ENCODE measurements at regions of chr5 and their contacts with region 1.

Region 1: GRCh38 chr5:83718195-83718825 is 2.3 kb downstream of the HAPLN1 start:
- DNase-seq: peak; percentile 73
- ATAC-seq: peak; percentile 56
- H3K4me3 ChIP-seq: no peak overlapping the region
- H3K27ac ChIP-seq: no peak overlapping the region
- H3K4me1 ChIP-seq: peaks cover 3% of the 10 kb centered on the region
- H3K27me3 ChIP-seq: peaks cover 8% of the 10 kb centered on the region
- CTCF ChIP-seq: peak; percentile 95
- POLR2A ChIP-seq: 0 out of 2 replicates have a peak, but pooled peaks have one; percentile 33
- RAD21 ChIP-seq: peak; percentile 99

Region 2: DNA sequence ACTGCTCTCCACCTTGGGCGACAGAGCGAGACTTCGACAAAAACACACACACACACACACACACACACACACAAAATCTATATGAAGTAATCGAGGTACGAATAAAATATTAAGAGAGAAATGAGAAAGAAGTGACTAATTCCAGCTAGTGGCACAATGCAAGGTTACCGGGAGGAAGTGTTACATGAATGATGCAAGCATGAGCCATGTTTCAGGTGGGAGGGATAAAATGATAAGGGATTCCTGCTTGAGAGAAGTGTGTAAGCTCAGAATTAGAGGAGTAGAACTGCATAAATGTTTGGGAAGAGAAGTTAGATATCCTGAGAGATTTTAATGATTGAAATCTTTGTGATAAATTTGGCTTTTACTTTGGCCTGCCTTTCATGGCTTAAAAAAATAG is 16.4 kb before region 1 on chr5:
- CTCF ChIA-PET with region 1: no interaction called
- POLR2A ChIA-PET with region 1: no interaction called
- dilution Hi-C with region 1: no loop called
- in situ Hi-C with region 1: no loop called
- intact Hi-C with region 1: no loop called
- DNase-seq: peak; percentile 6
- ATAC-seq: no peak
- H3K4me3 ChIP-seq: no peak overlapping the region
- H3K27ac ChIP-seq: no peak overlapping the region
- H3K4me1 ChIP-seq: no peaks in the 10 kb centered on the region
- H3K27me3 ChIP-seq: no peaks in the 10 kb centered on the region
- CTCF ChIP-seq: no peak
- POLR2A ChIP-seq: no peak
- RAD21 ChIP-seq: no peak

Region 3: GRCh38 chr5:83800201-83800600 is 81.9 kb after region 1 on chr5:
- CTCF ChIA-PET with region 1: no interaction called
- POLR2A ChIA-PET with region 1: no interaction called
- dilution Hi-C with region 1: no loop called
- in situ Hi-C with region 1: no loop called
- intact Hi-C with region 1: no loop called
- DNase-seq: no peak
- ATAC-seq: no peak
- H3K4me3 ChIP-seq: no peak overlapping the region
- H3K27ac ChIP-seq: no peak overlapping the region
- H3K4me1 ChIP-seq: no peaks in the 10 kb centered on the region
- H3K27me3 ChIP-seq: no peaks in the 10 kb centered on the region
- CTCF ChIP-seq: no peak
- POLR2A ChIP-seq: no peak
- RAD21 ChIP-seq: no peak

Region 4: DNA sequence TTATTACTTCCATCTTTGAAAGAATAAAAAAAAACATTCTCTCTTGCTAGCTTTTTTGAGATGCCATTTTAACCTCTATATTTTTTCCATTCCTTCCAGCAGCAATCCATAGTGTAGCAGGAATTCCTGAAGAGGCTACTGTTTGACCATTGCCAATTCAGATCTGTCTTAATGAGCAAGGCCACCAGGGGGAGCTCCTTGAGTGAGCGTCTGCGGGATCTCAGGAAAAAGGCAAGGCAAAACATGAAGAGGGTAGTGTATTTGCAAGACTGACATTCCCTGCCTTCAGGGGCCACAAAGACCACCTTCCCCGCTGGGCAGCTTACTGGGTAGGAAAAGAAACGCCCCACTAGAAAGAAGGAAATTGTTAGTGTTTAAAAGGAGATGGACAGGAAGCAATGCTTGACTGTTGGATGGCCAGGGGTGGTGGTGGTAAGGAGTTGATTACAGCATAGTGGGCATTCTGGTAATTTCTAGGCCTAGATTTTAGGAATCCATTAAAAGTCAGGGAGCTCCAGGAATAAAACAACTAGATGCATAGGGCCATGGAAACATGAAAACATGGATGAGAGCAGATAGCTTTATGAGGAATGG is 208.9 kb after region 1 on chr5:
- CTCF ChIA-PET with region 1: interaction called, 3 read pairs
- POLR2A ChIA-PET with region 1: no interaction called
- dilution Hi-C with region 1: no loop called
- in situ Hi-C with region 1: no loop called
- intact Hi-C with region 1: loop called (anchors 2 kb)
- DNase-seq: peak; percentile 64
- ATAC-seq: peak; percentile 53
- H3K4me3 ChIP-seq: no peak overlapping the region
- H3K27ac ChIP-seq: no peak overlapping the region
- H3K4me1 ChIP-seq: peaks cover 21% of the 10 kb centered on the region
- H3K27me3 ChIP-seq: no peaks in the 10 kb centered on the region
- CTCF ChIP-seq: peak; percentile 71
- POLR2A ChIP-seq: no peak
- RAD21 ChIP-seq: peak; percentile 73

Region 5: GRCh38 chr5:85049020-85049419 is 1330.7 kb after region 1 on chr5:
- CTCF ChIA-PET with region 1: interaction called, 3 read pairs
- POLR2A ChIA-PET with region 1: no interaction called
- dilution Hi-C with region 1: no loop called
- in situ Hi-C with region 1: loop called (anchors 5 kb)
- intact Hi-C with region 1: loop called (anchors 1 kb)
- DNase-seq: peak; percentile 70
- ATAC-seq: peak; percentile 93
- H3K4me3 ChIP-seq: no peak overlapping the region
- H3K27ac ChIP-seq: no peak overlapping the region
- H3K4me1 ChIP-seq: no peaks in the 10 kb centered on the region
- H3K27me3 ChIP-seq: no peaks in the 10 kb centered on the region
- CTCF ChIP-seq: peak; percentile 61
- POLR2A ChIP-seq: no peak
- RAD21 ChIP-seq: peak; percentile 70

Measured in IMR-90 (cell line).